ENCODE measurements at regions of chr20 and their contacts with region 1.

Region 1: DNA sequence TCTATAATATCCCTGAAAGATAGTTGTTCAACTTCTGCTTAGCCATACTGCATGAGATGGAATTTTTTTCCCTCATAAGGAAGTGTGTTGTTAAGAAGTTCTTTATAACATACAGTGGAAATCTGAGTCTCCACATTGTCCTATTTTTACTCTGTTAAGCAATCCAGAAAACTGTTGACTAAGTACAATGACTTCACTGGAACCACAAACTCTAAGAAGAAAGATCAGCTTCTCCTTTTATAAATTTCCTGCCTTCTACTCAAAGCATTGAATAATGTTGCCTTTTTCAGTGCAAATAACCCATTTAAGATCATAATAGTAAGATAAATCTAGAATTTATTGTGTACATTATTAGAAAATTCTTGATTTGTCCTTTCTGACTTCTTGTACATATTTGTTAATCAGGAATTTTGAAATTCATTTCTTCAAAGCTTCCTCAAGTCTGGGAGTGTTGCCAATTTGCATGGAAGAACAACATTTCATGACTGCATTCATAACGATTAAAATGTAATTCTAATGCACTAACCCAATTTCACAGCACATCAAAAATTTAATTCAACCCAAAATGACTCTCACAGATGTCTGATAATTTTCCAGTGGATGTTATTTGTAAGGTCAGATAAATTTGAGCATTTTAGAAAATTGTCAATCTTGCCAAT is 45.6 kb upstream of the ANKEF1 start:
- DNase-seq: peak; percentile 82
- H3K4me3 Mint-ChIP-seq: peak overlapping the region; percentile 26
- H3K27ac Mint-ChIP-seq: peak overlapping the region; percentile 82
- H3K4me1 Mint-ChIP-seq: peaks cover 26% of the 10 kb centered on the region
- H3K27me3 Mint-ChIP-seq: no peaks in the 10 kb centered on the region
- CTCF ChIP-seq: no peak

Region 2: DNA sequence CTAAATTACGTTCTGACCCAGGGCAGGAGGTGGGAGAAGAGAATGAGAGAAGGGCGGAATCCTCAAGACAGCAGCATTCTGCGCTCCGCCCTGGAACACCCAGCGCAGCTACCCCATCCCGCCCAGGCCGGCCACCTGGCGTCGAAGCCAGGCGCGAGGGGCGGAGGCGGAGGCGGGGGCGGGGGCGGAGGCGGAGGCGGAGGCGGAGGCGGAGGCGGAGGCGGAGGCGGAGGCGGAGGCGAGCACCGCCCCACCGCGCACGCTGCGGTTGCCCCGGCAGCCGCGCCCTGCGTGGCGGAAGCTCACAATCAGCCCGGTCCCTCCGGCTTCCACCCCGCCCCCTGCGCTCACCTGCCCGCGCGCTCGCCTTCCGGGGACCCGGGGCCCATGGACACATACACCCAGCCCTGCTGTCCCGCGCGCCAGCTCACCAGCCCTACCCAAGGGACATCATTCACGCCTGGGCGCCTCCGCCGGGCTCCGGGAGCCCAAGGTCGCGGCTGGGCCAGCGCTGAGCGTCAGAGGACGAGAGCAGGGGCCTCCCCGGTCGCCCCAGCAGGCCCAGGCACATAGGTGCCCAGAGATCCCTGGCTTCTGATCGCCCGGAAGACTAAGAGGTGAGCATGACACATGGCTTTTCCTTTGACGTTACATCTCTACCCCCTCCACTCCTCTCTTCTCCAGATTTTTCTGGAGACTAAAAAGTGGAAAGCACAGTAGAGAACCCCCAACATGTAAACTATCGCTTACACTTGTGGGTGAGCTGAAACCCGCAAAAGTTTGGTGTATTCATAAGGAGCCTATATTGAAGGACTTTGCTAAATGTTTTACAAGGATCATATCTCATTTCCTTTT is 45.7 kb after region 1 on chr20 and contains the start of gene ANKEF1:
- CTCF ChIA-PET with region 1: interaction called, 12 read pairs
- POLR2A ChIA-PET with region 1: interaction called, 20 read pairs
- intact Hi-C with region 1: no loop called
- DNase-seq: peak; percentile 72
- H3K4me3 Mint-ChIP-seq: peak within 1 kb of the TSS; percentile 73
- H3K27ac Mint-ChIP-seq: peak within 1 kb of the TSS; percentile 57
- H3K4me1 Mint-ChIP-seq: peaks cover 1% of the 10 kb centered on the region
- H3K27me3 Mint-ChIP-seq: no peaks in the 10 kb centered on the region
- CTCF ChIP-seq: no peak
- total RNA-seq, gene ANKEF1: 5.6 and 7.2 TPM in 2 replicates

Region 3: GRCh38 chr20:10079964-10080363 is 90.8 kb after region 1 on chr20:
- CTCF ChIA-PET with region 1: interaction called, 826 read pairs
- POLR2A ChIA-PET with region 1: interaction called, 16 read pairs
- intact Hi-C with region 1: no loop called
- DNase-seq: peak; percentile 91
- H3K4me3 Mint-ChIP-seq: no peak overlapping the region
- H3K27ac Mint-ChIP-seq: no peak overlapping the region
- H3K4me1 Mint-ChIP-seq: peaks cover 41% of the 10 kb centered on the region
- H3K27me3 Mint-ChIP-seq: no peaks in the 10 kb centered on the region
- CTCF ChIP-seq: no peak

Measured in MCF 10A (cell line).